WTC11 (cell line): ENCODE measurements at regions of chr2 and their contacts with region 1.

Region 1: DNA sequence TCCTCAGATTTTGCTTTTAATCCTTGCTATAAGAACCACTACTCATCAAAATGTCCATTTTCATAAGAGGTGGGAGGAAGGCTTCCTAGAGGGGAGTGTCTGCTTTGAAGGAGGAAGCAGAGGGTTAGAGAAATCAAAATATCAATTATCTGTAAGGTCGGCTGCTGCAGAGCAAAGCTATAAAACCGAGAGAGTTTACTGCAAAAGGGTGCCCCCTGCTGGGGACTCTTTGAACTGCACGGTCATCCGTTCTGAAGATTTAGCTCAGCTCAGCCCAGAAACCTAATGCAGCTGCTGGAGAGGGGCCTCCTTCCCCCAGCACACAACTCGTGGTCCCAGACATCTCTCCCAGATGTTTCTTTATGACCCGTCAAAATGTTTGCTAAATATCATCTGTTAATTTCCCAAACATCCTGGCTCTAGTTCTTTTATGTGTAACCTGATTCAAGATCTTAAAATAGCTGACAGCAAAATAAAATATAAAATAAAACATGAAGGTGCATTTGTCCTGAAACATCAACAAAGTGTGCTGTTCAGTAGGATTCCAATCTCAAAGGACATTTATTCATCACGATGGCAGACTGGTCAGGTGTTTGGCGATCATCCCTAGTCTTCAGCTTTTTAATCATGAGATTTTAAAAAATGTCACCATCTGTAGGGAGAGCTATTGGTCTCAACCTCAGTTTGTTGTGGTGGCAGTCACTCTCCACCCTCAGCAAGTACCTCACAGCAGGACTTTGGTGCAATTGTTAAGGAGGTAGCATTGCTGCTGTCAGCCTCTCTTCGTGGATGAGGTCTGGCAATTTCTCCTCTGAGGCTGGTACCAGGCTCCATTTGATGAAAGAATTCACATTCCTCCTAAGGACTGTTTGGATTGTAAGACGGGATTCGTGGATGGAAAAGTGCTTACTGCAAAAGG is 185.9 kb downstream of the MTX2 start:
- DNase-seq: peak; percentile 94
- ATAC-seq: peak; percentile 71
- H3K4me3 Mint-ChIP-seq: no peak overlapping the region
- H3K27ac Mint-ChIP-seq: no peak overlapping the region
- H3K4me1 Mint-ChIP-seq: peaks cover 22% of the 10 kb centered on the region
- H3K27me3 Mint-ChIP-seq: peaks cover 12% of the 10 kb centered on the region
- CTCF ChIP-seq: peak; percentile 97

Region 2: DNA sequence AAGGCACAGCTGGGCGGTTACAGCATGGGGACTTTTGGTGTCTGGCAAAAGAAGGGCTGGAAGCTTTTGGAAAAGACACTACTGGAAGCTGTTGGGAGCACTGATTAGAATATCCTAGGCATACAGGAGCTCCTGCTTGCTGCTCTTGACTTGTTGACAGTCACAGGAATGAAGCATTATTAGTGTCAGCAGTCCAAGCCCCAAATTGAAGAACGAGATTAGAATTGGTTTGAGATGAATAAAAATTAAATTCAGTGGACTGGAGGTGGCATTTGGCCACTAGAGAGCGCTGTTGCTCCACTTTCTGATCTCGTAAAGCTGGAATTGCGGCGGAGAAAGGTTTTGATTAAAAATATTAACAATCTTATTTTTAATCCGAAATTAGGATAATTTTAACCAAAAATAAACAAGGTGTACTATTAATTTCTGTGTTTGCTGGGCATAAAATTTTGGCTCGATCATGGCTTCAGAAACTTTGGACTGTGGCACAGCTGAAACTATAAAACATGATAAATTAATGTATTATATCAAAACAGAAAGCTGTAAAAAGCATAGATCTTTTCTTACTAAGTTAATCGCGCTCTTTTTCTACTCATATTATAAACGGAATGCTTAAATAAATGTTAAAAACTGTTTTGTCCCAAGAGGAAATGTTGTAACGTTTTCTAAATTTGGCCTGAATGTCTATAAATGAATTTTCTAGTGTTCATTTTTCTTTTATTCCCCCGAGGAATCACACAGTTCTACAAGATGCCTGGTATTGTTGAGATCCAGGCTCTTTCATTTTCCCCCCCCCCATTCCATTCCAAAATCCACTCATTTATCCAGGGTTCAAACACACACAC is 328.0 kb before region 1 on chr2:
- CTCF ChIA-PET with region 1: interaction called, 17 read pairs
- POLR2A ChIA-PET with region 1: no interaction called
- DNase-seq: peak; percentile 69
- ATAC-seq: no peak
- H3K4me3 Mint-ChIP-seq: no peak overlapping the region
- H3K27ac Mint-ChIP-seq: no peak overlapping the region
- H3K4me1 Mint-ChIP-seq: peaks cover 23% of the 10 kb centered on the region
- H3K27me3 Mint-ChIP-seq: peaks cover 98% of the 10 kb centered on the region
- CTCF ChIP-seq: peak; percentile 82

Region 3: DNA sequence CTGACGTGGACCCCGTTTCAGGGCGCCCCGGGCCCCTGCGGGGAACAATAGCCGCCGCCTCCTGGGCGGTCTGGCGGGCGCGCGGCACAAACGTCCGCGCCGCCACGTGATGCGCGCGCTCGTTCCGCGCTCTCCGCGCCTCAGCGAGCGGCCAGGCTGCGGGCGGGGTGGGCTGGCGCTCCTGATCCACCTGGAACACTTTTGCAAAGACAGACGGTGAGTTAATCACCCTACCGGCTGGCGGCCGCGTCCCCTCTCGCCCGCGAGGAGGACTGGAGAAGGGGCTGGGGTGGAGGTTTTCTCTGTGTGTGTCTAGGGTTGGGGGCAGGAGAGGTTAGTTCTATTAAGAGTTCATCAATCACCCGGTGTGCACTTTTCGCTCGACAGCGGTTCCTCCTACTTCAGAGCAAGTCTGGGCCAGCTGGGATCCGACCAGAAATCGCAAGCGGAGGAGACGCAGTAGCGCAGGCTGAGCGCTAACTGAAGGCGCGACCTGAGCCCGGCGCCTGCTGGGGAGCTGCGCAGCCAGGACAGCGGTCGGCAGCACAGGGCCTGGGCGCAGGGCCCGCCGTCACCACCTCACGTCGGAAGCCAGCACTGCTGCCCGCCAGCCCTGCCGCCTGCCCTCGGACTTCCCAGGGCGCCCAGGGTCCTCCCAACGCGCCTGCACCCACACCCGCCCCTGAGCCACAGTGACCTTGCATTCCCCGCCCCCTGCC is 277.0 kb before region 1 on chr2:
- CTCF ChIA-PET with region 1: interaction called, 31 read pairs
- POLR2A ChIA-PET with region 1: no interaction called
- DNase-seq: no peak
- ATAC-seq: peak; percentile 60
- H3K4me3 Mint-ChIP-seq: peak overlapping the region; percentile 67
- H3K27ac Mint-ChIP-seq: no peak overlapping the region
- H3K4me1 Mint-ChIP-seq: peaks cover 39% of the 10 kb centered on the region
- H3K27me3 Mint-ChIP-seq: peaks cover 100% of the 10 kb centered on the region
- CTCF ChIP-seq: no peak

Region 4: GRCh38 chr2:176317199-176317598 is 138.0 kb before region 1 on chr2:
- CTCF ChIA-PET with region 1: interaction called, 11 read pairs
- POLR2A ChIA-PET with region 1: no interaction called
- DNase-seq: no peak
- ATAC-seq: no peak
- H3K4me3 Mint-ChIP-seq: no peak overlapping the region
- H3K27ac Mint-ChIP-seq: peak overlapping the region; percentile 82
- H3K4me1 Mint-ChIP-seq: peaks cover 20% of the 10 kb centered on the region
- H3K27me3 Mint-ChIP-seq: no peaks in the 10 kb centered on the region
- CTCF ChIP-seq: no peak

Region 5: GRCh38 chr2:176554101-176555048 is 99.2 kb after region 1 on chr2:
- CTCF ChIA-PET with region 1: interaction called, 33 read pairs
- POLR2A ChIA-PET with region 1: no interaction called
- DNase-seq: no peak
- ATAC-seq: peak; percentile 35; the same call in 1 of the 2 replicates
- H3K4me3 Mint-ChIP-seq: peak overlapping the region; percentile 61
- H3K27ac Mint-ChIP-seq: no peak overlapping the region
- H3K4me1 Mint-ChIP-seq: peaks cover 22% of the 10 kb centered on the region
- H3K27me3 Mint-ChIP-seq: peaks cover 43% of the 10 kb centered on the region
- CTCF ChIP-seq: no peak; the same call in 1 of the 2 replicates

Region 6: DNA sequence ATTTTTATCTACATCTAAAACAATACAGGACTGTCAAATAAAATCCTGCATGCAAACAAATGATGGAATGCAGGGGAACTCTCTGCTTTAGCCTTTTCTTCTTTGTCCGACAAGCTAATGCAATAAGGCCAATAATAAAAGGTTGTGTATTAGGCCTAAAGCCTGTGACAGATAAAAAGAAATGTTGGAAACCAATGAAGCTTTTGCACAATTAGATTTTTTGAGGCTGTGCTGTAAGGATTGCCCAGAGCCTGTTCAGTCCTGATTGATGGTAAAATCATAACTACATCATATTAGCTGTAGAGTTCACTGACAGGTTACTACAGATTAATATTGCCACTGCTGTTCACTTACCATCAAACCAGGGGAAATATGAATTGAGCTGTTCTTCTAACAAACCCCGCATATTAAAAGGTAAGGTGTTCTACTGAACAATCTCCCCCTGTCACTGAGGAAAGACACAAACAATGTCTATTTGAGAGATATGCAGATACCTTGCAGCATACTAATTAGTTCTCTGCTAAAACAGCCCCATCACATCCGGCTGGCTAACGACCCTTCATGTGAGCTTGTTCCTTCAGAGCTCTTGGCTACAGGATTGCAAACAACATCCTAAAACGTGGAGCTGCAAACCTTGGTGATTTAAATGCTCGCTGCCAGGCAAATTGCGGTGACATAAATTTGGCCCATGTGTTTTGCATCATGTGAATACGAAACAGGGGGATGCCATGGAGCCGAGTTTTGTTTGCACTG is 119.5 kb after region 1 on chr2:
- CTCF ChIA-PET with region 1: no interaction called
- POLR2A ChIA-PET with region 1: no interaction called
- DNase-seq: no peak
- ATAC-seq: no peak
- H3K4me3 Mint-ChIP-seq: no peak overlapping the region
- H3K27ac Mint-ChIP-seq: no peak overlapping the region
- H3K4me1 Mint-ChIP-seq: peaks cover 8% of the 10 kb centered on the region
- H3K27me3 Mint-ChIP-seq: no peaks in the 10 kb centered on the region
- CTCF ChIP-seq: no peak

Region 7: GRCh38 chr2:176643646-176644045 is 188.5 kb after region 1 on chr2:
- CTCF ChIA-PET with region 1: interaction called, 12 read pairs
- POLR2A ChIA-PET with region 1: no interaction called
- DNase-seq: peak; percentile 22
- ATAC-seq: peak; percentile 68
- H3K4me3 Mint-ChIP-seq: no peak overlapping the region
- H3K27ac Mint-ChIP-seq: no peak overlapping the region
- H3K4me1 Mint-ChIP-seq: peaks cover 44% of the 10 kb centered on the region
- H3K27me3 Mint-ChIP-seq: peaks cover 95% of the 10 kb centered on the region
- CTCF ChIP-seq: no peak

Region 8: DNA sequence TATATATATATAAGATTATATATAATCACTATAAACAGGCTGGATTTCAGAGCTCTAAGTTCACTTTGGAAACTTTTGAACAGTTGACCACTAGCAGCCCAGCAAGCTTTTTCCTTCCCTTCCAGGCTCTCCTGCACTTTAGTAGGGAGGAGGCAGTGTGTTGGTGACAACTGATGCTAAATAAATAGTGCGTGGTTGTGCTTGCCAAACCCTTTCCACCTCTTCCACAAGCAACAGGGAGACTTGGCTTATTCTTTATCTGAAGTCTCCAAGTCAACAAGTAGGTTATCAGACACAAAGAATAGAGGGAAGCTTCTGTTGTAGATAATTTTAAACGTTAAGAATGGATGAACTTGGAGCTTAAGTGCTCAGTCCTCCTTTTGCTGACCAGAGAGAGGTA is 349.2 kb after region 1 on chr2:
- CTCF ChIA-PET with region 1: no interaction called
- POLR2A ChIA-PET with region 1: no interaction called
- DNase-seq: no peak
- ATAC-seq: no peak
- H3K4me3 Mint-ChIP-seq: no peak overlapping the region
- H3K27ac Mint-ChIP-seq: no peak overlapping the region
- H3K4me1 Mint-ChIP-seq: no peaks in the 10 kb centered on the region
- H3K27me3 Mint-ChIP-seq: no peaks in the 10 kb centered on the region
- CTCF ChIP-seq: no peak